Ascending aorta (tissue), 2 donors: ENCODE measurements at regions of chr7 and their contacts with region 1.

Region 1: GRCh38 chr7:134605973-134606923 is 40.4 kb upstream of the BPGM start:
- DNase-seq: peak in 1 of 2 donors; percentile 77
- H3K4me3 ChIP-seq: peak overlapping the region in 1 of 2 donors; percentile 24
- H3K27ac ChIP-seq: no peak overlapping the region
- H3K4me1 ChIP-seq: no peaks in the 10 kb centered on the region
- H3K27me3 ChIP-seq: no peaks in the 10 kb centered on the region
- CTCF ChIP-seq: peak; percentile 84 to 92 (median 86)

Region 2: GRCh38 chr7:134514663-134515062 is 91.6 kb before region 1 on chr7:
- intact Hi-C with region 1: loop called (anchors 2 kb)
- DNase-seq: no peak
- H3K4me3 ChIP-seq: no peak overlapping the region
- H3K27ac ChIP-seq: no peak overlapping the region
- H3K4me1 ChIP-seq: peaks cover 0 to 12% of the 10 kb centered on the region in 2 donors
- H3K27me3 ChIP-seq: no peaks in the 10 kb centered on the region
- CTCF ChIP-seq: peak; percentile 62 to 80 (median 75)